ENCODE measurements at regions of chr12 and their contacts with region 1.

Region 1: DNA sequence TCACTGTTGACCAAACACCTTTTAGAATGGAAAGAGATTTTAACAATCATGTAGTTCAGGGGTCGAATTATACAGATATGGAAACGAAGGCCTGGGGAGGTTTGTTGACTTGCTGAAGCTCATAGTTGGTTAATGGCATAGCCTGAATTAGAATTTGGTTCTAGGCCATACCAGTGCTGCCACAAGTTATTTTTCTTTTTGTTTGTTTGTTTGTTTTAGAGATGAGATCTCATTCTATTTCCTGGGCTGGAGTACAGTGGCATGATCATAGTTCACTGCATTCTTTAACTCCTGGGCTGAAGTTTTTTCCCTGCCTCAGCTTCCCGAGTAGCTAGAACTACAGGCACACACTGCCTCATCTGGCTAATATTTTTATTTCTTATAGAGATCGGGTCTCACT is 25.4 kb upstream of the ALG10B start:
- DNase-seq: no peak
- H3K4me3 ChIP-seq: no peak overlapping the region
- H3K27ac ChIP-seq: no peak overlapping the region
- H3K4me1 ChIP-seq: no peaks in the 10 kb centered on the region
- H3K27me3 ChIP-seq: peaks cover 10% of the 10 kb centered on the region
- CTCF ChIP-seq: no peak

Region 2: GRCh38 chr12:38110026-38110699 is 181.0 kb before region 1 on chr12:
- intact Hi-C with region 1: loop called (anchors 10 kb)
- DNase-seq: no peak
- H3K4me3 ChIP-seq: no peak overlapping the region
- H3K27ac ChIP-seq: no peak overlapping the region
- H3K4me1 ChIP-seq: no peaks in the 10 kb centered on the region
- H3K27me3 ChIP-seq: no peaks in the 10 kb centered on the region
- CTCF ChIP-seq: no peak